Right ventricle myocardium superior (tissue), 1 donor: ENCODE measurements at regions of chr17 and their contacts with region 1.

Region 1: DNA sequence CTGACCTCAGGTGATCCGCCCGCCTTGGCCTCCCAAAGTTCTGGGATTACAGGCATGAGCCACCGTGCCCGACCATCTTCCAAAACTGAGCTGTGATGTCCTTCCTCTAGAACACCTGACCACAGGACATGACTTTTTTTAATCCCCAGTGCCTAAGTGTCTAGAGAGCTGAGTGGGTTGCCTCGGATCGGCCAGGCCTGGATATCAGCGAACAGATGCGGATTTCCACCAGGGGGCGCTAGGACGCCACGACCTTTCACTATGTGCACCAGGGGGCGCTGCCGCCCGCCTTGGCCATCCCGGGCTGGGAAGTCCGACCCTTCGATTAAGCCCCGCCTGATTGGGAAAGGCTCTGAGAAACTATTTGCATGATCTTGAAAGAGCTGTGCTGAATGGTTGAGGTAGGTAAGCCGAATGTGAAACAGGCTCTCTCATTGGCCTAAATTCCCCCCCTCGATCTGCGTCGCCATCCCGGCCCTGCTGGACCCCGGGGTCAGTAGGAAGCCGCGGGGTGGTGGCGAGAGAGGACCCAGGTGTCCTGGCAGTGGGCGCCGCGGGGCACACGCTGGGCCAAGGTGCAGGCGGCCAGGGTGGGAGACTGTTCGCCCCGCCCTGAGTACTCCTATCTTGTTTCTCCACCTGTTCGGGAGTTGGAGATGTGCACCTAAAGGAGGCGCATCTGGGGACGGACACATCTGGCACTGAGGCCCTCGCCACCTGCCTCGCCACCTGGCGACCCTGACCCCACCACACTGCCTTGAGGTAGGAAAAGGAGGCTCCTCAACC is at the start of gene ACBD4:
- DNase-seq: peak; percentile 97
- ATAC-seq: peak; percentile 82
- total RNA-seq, gene ACBD4: 8.0 TPM

Region 2: GRCh38 chr17:44887971-44888954 is 247.1 kb before region 1 on chr17:
- intact Hi-C with region 1: no loop called
- DNase-seq: no peak
- ATAC-seq: no peak

Region 3: GRCh38 chr17:45098869-45099616 is 36.3 kb before region 1 on chr17:
- intact Hi-C with region 1: loop called (anchors 5 kb)
- DNase-seq: peak; percentile 92
- ATAC-seq: peak; percentile 78

Region 4: GRCh38 chr17:45197555-45198334 is 62.4 kb after region 1 on chr17:
- intact Hi-C with region 1: loop called (anchors 1 kb)
- DNase-seq: peak; percentile 95
- ATAC-seq: peak; percentile 96